CD14-positive monocyte (primary cell): ENCODE measurements at regions of chr5 and their contacts with region 1.

Region 1: DNA sequence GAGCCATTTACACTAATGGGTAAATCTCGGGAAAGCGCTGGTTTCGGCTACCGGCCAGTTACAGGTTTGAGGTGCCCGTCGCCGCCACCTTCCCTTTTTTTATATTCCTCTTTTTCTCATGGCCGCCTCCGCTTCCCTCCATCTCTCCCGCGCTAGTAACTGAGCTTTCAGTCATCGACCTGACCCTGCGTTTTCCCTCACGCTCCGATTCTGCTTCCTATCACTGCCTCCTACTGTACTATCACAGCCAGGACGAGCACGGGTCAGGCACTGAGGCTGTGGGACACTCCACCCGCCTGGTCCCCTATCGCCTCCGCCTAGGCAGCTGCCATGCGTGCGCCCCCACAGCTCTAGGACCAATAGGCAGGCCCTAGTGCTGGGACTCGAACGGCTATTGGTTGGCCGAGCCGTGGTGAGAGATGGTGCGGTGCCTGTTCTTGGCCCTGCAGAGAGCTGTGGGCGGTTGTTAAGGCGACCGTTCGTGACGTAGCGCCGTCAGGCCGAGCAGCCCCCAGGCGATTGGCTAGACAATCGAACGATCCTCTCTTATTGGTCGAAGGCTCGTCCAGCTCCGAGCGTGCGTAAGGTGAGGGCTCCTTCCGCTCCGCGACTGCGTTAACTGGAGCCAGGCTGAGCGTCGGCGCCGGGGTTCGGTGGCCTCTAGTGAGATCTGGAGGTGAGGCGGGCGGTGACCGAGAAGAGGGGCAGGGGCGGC is at the start of gene HMGCR:
- DNase-seq: peak; percentile 98 to 100 (median 99)
- H3K4me3 ChIP-seq: peak within 1 kb of the TSS; percentile 79 to 87 (median 82)
- H3K4me3 Mint-ChIP-seq: no peak within 1 kb of the TSS
- H3K27ac ChIP-seq: peak within 1 kb of the TSS; percentile 92 to 95
- H3K27ac Mint-ChIP-seq: no peak within 1 kb of the TSS
- H3K4me1 ChIP-seq: peaks cover 23 to 33% of the 10 kb centered on the region in 2 donors
- H3K4me1 Mint-ChIP-seq: peaks cover 35% of the 10 kb centered on the region
- H3K27me3 ChIP-seq: no peaks in the 10 kb centered on the region
- H3K27me3 Mint-ChIP-seq: no peaks in the 10 kb centered on the region
- CTCF ChIP-seq: peak; percentile 23
- polyA plus RNA-seq, gene HMGCR: 19.8 to 33.3 (median 31.9) TPM

Region 2: DNA sequence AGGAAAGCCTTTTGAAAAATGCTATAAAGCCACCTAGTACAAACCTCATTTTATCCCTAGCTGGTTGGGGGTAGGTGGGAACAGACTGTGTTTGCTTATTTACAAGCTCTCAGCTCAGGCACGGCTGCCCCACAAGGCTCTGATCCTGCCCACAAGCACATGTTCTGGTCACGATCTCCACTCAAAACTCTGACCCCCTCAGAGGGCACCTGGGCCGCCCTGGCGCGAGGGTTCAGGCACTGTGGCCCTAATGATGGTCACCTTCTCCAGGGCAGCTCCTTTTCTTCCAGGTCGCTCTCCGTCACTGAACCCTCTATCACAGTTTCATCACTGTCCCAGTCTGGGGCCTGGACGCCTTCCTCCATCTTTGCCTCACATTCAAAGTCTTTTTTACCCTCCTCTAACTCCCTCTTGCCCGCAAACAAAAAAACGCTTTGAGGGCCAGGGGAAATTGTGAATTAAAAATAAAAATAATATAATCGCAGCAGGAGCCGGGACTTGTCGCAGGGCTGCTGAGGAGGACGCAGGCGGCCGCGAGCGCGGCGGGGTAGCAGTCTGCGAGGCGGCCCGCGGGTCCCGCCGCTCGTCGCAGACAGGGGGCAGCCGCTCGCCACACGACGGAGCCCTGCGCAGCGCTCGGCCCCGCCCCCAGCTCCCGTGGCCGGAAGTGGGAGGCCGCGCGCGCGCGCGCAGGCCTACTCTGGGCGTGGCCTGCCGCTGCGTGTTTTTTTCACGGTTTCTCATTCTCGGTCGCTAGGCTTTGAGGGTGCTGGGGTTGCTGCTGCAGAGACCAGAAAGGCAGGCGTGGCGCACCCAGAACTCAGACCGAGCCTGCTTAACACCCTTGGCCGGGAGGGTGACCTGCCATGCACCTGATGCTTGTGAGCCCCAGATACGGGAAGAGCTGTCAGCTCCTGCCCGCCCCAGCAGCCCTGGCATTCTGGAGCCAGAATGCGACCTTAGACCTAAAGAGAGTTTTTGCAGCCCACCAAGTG is 100.2 kb before region 1 on chr5 and contains the start of gene ANKRD31:
- intact Hi-C with region 1: loop called (anchors 2 to 5 kb)
- DNase-seq: peak; percentile 80 to 84 (median 83)
- H3K4me3 ChIP-seq: peak within 1 kb of the TSS; percentile 56 to 87 (median 87)
- H3K4me3 Mint-ChIP-seq: peak within 1 kb of the TSS; percentile 87 to 97
- H3K27ac ChIP-seq: peak within 1 kb of the TSS; percentile 44 to 79
- H3K27ac Mint-ChIP-seq: peak within 1 kb of the TSS in 6 of 7 donors; percentile 75 to 93 (median 82)
- H3K4me1 ChIP-seq: peaks cover 9 to 13% of the 10 kb centered on the region in 2 donors
- H3K4me1 Mint-ChIP-seq: peaks cover 8% of the 10 kb centered on the region
- H3K27me3 ChIP-seq: peaks cover 0 to 8% of the 10 kb centered on the region in 2 donors
- H3K27me3 Mint-ChIP-seq: peaks cover 0 to 10% (median 8%) of the 10 kb centered on the region in 3 donors
- CTCF ChIP-seq: peak; percentile 89
- polyA plus RNA-seq, gene ANKRD31: 0.05 TPM in 1 of 3 donors, not detected in the others

Region 3: GRCh38 chr5:75320341-75320740 is 16.4 kb before region 1 on chr5:
- intact Hi-C with region 1: loop called in 1 of 2 experiments (anchors 2 kb)
- DNase-seq: peak; percentile 88 to 96 (median 95)
- H3K4me3 ChIP-seq: peak overlapping the region in 2 of 3 experiments; percentile 17 to 62
- H3K4me3 Mint-ChIP-seq: peak overlapping the region; percentile 40 to 72
- H3K27ac ChIP-seq: peak overlapping the region; percentile 86 to 99
- H3K27ac Mint-ChIP-seq: peak overlapping the region; percentile 96 to 100 (median 98)
- H3K4me1 ChIP-seq: peaks cover 58 to 65% of the 10 kb centered on the region in 2 donors
- H3K4me1 Mint-ChIP-seq: peaks cover 52% of the 10 kb centered on the region
- H3K27me3 ChIP-seq: no peaks in the 10 kb centered on the region
- H3K27me3 Mint-ChIP-seq: peaks cover 0 to 7% (median 0%) of the 10 kb centered on the region in 3 donors
- CTCF ChIP-seq: no peak

Region 4: DNA sequence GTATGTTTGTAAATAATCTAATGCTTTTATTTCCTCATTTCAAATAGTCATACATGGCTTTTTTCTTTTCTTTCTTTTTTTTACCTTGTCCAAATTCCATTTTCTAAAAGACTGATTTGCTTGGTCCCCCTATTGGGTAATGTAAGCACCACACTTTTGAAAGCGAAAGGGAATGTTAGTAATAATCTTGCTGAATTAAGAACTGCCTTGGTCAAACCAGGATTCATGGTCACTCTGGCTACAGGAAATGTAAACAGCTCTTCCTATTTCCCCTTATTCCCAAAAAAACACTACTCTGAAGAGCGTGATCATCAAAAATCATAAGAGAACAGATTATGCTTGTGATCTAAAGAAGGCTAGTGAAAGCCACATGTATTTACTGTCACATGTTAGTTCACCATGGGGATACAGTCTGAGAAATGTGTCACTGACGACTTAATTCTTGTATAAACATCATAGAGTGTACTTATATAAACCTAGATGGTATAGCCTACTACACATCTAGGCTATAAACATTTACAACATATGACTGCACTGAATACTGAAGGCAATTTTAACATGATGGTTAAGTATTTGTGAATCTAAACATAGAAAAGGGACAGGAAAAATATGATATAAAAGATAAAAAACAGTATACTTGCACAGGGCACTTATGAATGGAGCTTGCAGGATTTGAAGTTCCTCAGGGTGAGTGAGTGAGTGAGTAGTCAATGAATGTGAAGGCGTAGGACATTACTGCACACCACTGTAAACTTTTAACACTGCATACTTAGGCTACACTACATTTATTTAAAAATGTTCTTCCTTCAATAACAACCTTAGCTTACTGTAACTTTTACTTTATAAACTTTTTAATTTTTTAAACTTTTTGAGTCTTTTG is 75.6 kb after region 1 on chr5:
- intact Hi-C with region 1: no loop called
- DNase-seq: no peak
- H3K4me3 ChIP-seq: no peak overlapping the region
- H3K4me3 Mint-ChIP-seq: no peak overlapping the region
- H3K27ac ChIP-seq: peak overlapping the region in 1 of 2 donors; percentile 45
- H3K27ac Mint-ChIP-seq: peak overlapping the region in 2 of 7 donors; percentile 6 to 26
- H3K4me1 ChIP-seq: no peaks in the 10 kb centered on the region
- H3K4me1 Mint-ChIP-seq: no peaks in the 10 kb centered on the region
- H3K27me3 ChIP-seq: no peaks in the 10 kb centered on the region
- H3K27me3 Mint-ChIP-seq: no peaks in the 10 kb centered on the region
- CTCF ChIP-seq: no peak

Region 5: GRCh38 chr5:75734913-75735789 is 398.4 kb after region 1 on chr5:
- intact Hi-C with region 1: no loop called
- DNase-seq: no peak
- H3K4me3 ChIP-seq: no peak overlapping the region
- H3K4me3 Mint-ChIP-seq: no peak overlapping the region
- H3K27ac ChIP-seq: no peak overlapping the region
- H3K27ac Mint-ChIP-seq: peak overlapping the region in 2 of 7 donors; percentile 2 to 31
- H3K4me1 ChIP-seq: no peaks in the 10 kb centered on the region
- H3K4me1 Mint-ChIP-seq: no peaks in the 10 kb centered on the region
- H3K27me3 ChIP-seq: no peaks in the 10 kb centered on the region
- H3K27me3 Mint-ChIP-seq: peaks cover 0 to 4% (median 3%) of the 10 kb centered on the region in 3 donors
- CTCF ChIP-seq: no peak